ENCODE measurements at regions of chr1 and their contacts with region 1.

Region 1: DNA sequence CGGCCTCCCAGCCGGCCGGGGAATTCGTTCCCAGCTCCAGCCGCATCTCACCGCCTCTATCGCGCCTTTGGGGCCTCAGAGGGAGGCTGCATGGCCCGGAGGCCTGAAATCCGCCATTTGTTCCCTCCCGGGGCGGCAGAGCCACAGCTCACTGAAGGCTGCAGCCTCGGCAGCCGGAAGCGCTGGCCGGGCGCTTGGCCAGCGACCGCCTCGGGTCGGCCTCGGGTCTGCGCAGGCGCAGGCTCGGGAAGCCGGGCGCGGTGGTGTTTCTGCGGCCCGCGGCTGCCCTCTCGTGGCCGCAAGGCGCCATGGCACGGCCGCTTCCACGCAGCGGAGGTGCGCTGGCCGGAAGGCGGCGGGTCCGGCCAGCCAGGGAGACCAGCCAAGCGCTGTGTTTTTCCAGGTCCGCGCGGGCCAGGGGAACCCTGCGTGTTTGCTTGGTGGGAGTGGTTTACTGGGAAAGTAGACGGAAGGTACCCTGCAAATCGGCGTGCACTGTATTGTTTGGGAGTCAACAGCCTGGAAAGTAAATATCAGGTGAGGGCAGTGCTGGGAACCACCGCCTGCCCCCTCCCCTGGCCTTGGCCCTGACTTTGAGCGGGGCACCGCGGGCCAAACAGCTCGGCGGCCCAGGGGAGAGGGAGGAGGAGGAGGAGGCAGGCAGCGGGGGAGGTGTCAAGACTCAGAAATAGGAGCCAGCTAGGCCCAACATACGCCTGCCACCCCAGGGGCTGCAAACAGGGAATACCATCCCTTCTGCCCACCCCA is 52.7 kb upstream of the CD34 start:
- DNase-seq: peak; percentile 66 to 85 (median 80)
- H3K4me3 ChIP-seq: peak overlapping the region; percentile 27 to 86
- H3K4me3 Mint-ChIP-seq: peak overlapping the region; percentile 81 to 93 (median 87)
- H3K27ac ChIP-seq: peak overlapping the region; percentile 48
- H3K27ac Mint-ChIP-seq: peak overlapping the region in 2 of 7 donors; percentile 17 to 33
- H3K4me1 ChIP-seq: peaks cover 21% of the 10 kb centered on the region
- H3K4me1 Mint-ChIP-seq: peaks cover 4 to 22% (median 14%) of the 10 kb centered on the region in 4 donors
- H3K27me3 ChIP-seq: peaks cover 14% of the 10 kb centered on the region
- H3K27me3 Mint-ChIP-seq: peaks cover 19 to 27% of the 10 kb centered on the region in 2 donors

Region 2: GRCh38 chr1:207811920-207812720 is 151.5 kb before region 1 on chr1:
- CTCF ChIA-PET with region 1: interaction called, 11 read pairs
- POLR2A ChIA-PET with region 1: interaction called, 4 read pairs
- intact Hi-C with region 1: no loop called
- DNase-seq: no peak
- H3K4me3 ChIP-seq: no peak overlapping the region
- H3K4me3 Mint-ChIP-seq: peak overlapping the region in 1 of 8 donors; percentile 17
- H3K27ac ChIP-seq: no peak overlapping the region
- H3K27ac Mint-ChIP-seq: peak overlapping the region in 6 of 7 donors; percentile 13 to 85 (median 61)
- H3K4me1 ChIP-seq: peaks cover 75% of the 10 kb centered on the region
- H3K4me1 Mint-ChIP-seq: peaks cover 51 to 90% (median 74%) of the 10 kb centered on the region in 4 donors
- H3K27me3 ChIP-seq: no peaks in the 10 kb centered on the region
- H3K27me3 Mint-ChIP-seq: no peaks in the 10 kb centered on the region

Region 3: DNA sequence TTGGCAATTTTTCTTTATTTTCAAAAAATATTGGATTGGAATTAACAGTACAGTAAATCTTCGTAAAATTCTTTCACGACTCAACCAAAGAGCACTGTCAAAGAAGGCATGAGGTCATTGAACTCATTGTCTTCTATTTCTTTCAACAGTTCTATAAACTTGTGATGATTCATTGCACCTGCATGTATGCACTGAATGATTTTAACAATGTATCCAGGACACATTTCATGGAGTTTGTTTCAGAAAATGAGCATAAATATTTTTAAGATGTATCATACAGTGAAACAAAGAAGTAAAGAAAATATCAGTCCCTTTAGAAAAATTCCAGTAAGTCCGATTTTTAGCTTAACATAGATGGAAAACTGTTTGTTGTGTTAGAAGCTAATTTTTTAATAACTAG is 19.0 kb before region 1 on chr1:
- CTCF ChIA-PET with region 1: interaction called, 23 read pairs
- POLR2A ChIA-PET with region 1: no interaction called
- intact Hi-C with region 1: no loop called
- DNase-seq: no peak
- H3K4me3 ChIP-seq: no peak overlapping the region
- H3K4me3 Mint-ChIP-seq: no peak overlapping the region
- H3K27ac ChIP-seq: no peak overlapping the region
- H3K27ac Mint-ChIP-seq: no peak overlapping the region
- H3K4me1 ChIP-seq: no peaks in the 10 kb centered on the region
- H3K4me1 Mint-ChIP-seq: no peaks in the 10 kb centered on the region
- H3K27me3 ChIP-seq: no peaks in the 10 kb centered on the region
- H3K27me3 Mint-ChIP-seq: peaks cover 24% of the 10 kb centered on the region in 2 donors

Region 4: DNA sequence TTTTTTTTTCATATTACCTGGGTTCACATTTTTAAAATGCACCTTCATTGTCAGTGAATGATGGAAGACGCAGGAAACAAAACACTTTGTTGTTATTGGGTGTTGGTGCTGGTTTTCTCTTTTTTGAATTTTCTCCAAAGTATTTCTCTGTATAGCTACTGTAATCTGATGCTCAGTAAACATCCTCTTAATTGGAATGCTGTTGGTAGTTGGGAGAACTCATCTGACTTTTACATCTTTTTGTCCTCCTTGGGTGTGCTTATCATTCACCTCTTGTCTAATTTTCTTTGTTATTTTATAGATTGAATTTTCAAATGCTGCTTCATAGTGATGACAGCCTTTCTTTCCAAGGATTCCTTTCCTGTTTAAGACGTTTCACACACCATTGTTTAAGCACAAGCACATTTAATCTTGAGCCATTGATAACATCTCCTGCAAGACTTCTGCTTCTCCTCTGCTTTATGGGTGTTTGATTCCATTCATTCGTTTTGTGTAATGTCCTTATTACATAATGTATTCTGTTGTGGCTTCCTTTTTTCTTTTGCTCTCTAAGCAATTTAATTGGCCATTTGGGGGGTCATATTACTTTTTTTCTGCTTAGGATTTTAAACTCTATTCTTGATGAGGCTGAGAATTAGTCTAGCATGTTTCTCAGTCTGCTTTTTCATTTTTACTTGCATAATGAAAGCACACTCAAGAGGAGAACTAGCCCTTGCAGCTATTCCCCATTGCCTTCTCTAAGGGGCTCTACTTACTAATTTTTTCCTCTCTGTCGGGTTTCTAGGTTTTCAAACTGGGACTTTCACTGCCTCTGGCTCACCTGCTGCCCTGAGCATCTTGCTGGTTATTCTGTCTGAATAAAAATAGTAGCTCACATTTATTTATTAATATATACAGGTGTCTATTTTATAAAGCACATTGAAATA is 10.7 kb before region 1 on chr1:
- CTCF ChIA-PET with region 1: interaction called, 22 read pairs
- POLR2A ChIA-PET with region 1: interaction called, 4 read pairs
- intact Hi-C with region 1: no loop called
- DNase-seq: no peak
- H3K4me3 ChIP-seq: no peak overlapping the region
- H3K4me3 Mint-ChIP-seq: no peak overlapping the region
- H3K27ac ChIP-seq: no peak overlapping the region
- H3K27ac Mint-ChIP-seq: no peak overlapping the region
- H3K4me1 ChIP-seq: no peaks in the 10 kb centered on the region
- H3K4me1 Mint-ChIP-seq: no peaks in the 10 kb centered on the region
- H3K27me3 ChIP-seq: peaks cover 8% of the 10 kb centered on the region
- H3K27me3 Mint-ChIP-seq: peaks cover 17 to 34% of the 10 kb centered on the region in 2 donors

Region 5: DNA sequence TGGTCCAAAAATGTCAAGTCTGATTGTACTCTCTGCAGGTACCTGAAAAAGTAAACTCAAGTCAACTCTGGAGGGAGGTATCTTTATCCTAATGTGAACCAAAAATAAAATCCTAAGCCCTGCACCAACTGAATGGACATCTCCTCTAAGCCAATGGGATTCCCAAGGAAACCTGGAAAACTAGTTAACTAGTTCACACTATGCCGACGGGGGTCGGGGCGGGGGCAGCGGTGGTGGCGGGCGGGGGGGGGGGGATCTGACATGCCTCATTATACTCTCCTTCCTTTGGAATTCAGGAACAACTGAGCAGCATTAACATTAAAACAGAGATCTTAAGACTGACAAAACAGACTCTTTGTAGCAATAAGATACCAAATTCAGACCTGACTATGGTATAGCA is 1167.3 kb after region 1 on chr1:
- CTCF ChIA-PET with region 1: no interaction called
- POLR2A ChIA-PET with region 1: no interaction called
- intact Hi-C with region 1: no loop called
- DNase-seq: no peak
- H3K4me3 ChIP-seq: no peak overlapping the region
- H3K4me3 Mint-ChIP-seq: no peak overlapping the region
- H3K27ac ChIP-seq: no peak overlapping the region
- H3K27ac Mint-ChIP-seq: no peak overlapping the region
- H3K4me1 ChIP-seq: no peaks in the 10 kb centered on the region
- H3K4me1 Mint-ChIP-seq: no peaks in the 10 kb centered on the region
- H3K27me3 ChIP-seq: no peaks in the 10 kb centered on the region
- H3K27me3 Mint-ChIP-seq: no peaks in the 10 kb centered on the region

Measured in CD4-positive, alpha-beta memory T cell (primary cell).